ENCODE measurements at regions of chr13 and their contacts with region 1.

Region 1: DNA sequence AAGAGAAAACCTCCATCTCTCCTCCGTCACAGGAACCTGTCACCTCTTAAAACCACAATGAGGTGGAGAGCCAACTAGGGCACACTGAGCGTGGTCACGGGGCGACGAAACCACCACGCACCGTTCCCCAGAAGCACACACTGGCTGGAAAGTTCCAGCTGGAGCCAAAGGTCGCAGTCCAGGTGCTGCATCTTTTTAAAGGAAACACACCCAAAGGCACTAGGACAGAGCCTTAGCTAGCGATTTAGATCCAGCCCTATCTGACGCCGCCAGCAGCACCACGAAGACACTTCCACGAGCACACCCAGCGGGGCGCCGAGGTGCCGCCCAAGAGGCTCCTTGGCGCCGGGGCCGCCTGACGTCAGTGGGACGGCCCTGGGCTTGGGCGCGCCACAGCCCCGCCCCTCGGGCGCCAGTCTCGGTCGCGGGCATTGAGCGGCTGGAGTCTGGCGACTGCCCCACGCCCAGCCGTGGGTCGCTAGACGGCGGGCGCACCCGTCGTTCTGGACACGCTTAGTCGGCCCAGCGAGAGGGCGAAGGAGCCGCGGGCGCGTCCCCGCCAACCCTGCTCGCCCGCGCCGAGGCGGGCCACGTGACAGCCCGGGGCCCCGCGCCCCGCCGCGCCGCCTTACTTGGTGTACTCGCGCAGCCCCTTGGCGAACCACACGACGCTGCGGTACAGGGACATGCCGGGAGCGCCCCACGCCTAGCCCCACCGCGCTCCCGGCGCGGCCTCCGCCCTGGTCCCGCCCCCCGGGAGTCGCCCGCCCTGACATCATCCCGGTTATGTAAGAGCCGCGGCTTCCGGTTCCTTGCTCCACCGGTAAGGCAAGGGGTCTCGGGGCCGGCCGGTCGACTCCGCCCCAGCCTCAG is at the start of gene DHRS12:
- DNase-seq: peak; percentile 61
- H3K4me3 ChIP-seq: peak within 1 kb of the TSS; percentile 73 to 91 (median 80)
- H3K27ac ChIP-seq: peak within 1 kb of the TSS; percentile 97 to 100 (median 98)
- H3K4me1 ChIP-seq: peaks cover 20 to 58% (median 33%) of the 10 kb centered on the region in 3 donors
- H3K27me3 ChIP-seq: no peaks in the 10 kb centered on the region
- CTCF ChIP-seq: peak in 2 of 6 experiments; percentile 3 to 23
- POLR2A ChIP-seq: peak in 3 of 4 donors; percentile 73 to 95 (median 92)
- total RNA-seq, gene DHRS12: 4.7 to 11.3 (median 7.9) TPM

Region 2: DNA sequence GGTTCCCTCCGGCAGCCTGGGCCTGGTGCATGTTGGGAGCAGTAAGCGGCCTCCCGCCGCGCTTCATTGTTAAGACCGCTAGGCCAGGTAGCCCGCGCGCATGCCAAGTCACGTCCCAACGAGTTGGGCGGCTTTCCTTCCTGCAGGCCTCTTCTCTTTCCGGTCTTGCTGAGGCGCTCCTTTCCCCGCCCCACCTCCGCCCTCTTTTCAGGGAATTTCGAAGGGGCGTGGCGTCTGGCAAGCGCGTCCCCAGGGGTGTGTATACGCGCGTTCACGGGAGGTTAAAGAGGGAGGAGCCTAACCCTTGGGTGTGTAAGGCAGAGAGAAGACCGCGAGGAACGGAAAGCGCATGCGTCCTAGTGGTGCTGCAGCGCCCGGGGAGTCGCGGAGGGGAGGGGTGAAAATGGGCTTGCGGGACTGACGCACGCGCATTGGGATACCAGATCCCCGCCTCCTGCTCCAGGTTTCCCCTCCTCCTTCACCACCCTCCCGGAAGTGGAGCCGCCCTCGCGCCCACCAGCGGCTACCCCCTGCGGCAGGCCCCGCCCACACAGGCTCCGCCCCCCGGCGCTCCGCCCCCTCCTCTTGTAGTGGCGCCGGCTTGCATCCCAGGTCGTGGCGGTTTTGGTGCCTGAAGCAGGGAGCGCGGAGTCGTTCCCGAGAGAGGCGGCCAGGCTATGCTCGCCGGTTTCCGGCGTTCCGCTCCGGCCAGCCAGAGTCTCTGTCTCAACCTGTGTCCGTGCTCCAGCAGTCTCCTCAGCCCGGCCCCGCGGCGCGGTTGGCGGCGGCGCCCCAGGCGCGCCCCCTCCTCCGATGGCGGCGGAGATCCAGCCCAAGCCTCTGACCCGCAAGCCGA is 219.6 kb before region 1 on chr13 and contains the start of gene WDFY2:
- intact Hi-C with region 1: loop called (anchors 5 kb)
- DNase-seq: peak; percentile 100
- H3K4me3 ChIP-seq: peak within 1 kb of the TSS; percentile 66 to 95 (median 82)
- H3K27ac ChIP-seq: peak within 1 kb of the TSS; percentile 94 to 98 (median 96)
- H3K4me1 ChIP-seq: peaks cover 14 to 49% (median 19%) of the 10 kb centered on the region in 3 donors
- H3K27me3 ChIP-seq: no peaks in the 10 kb centered on the region
- CTCF ChIP-seq: peak in 4 of 6 experiments; percentile 5 to 39 (median 24)
- POLR2A ChIP-seq: peak in 3 of 4 donors; percentile 77 to 92 (median 91)
- total RNA-seq, gene WDFY2: 7.7 to 23.3 (median 18.2) TPM

Measured in esophagus squamous epithelium (tissue), 5 donors.